Endothelial cell of umbilical vein (primary cell): ENCODE measurements at regions of chr11 and their contacts with region 1.

Region 1: GRCh38 chr11:9774591-9775397 is 110.9 kb downstream of the SWAP70 start:
- DNase-seq: peak; percentile 35
- H3K4me3 ChIP-seq: no peak overlapping the region
- H3K27ac ChIP-seq: no peak overlapping the region
- H3K4me1 ChIP-seq: peaks cover 6% of the 10 kb centered on the region
- H3K27me3 ChIP-seq: no peaks in the 10 kb centered on the region
- CTCF ChIP-seq: no peak
- POLR2A ChIP-seq: no peak

Region 2: GRCh38 chr11:9600644-9601036 is 174.2 kb before region 1 on chr11:
- CTCF ChIA-PET with region 1: no interaction called
- POLR2A ChIA-PET with region 1: no interaction called
- dilution Hi-C with region 1: no loop called
- intact Hi-C with region 1: no loop called
- DNase-seq: no peak
- H3K4me3 ChIP-seq: no peak overlapping the region
- H3K27ac ChIP-seq: no peak overlapping the region
- H3K4me1 ChIP-seq: peaks cover 3% of the 10 kb centered on the region
- H3K27me3 ChIP-seq: no peaks in the 10 kb centered on the region
- CTCF ChIP-seq: no peak
- POLR2A ChIP-seq: no peak

Region 3: GRCh38 chr11:9626496-9627394 is 148.0 kb before region 1 on chr11:
- CTCF ChIA-PET with region 1: no interaction called
- POLR2A ChIA-PET with region 1: no interaction called
- dilution Hi-C with region 1: no loop called
- intact Hi-C with region 1: no loop called
- DNase-seq: peak; percentile 96
- H3K4me3 ChIP-seq: peak overlapping the region in 1 of 3 experiments; percentile 19
- H3K27ac ChIP-seq: peak overlapping the region; percentile 96
- H3K4me1 ChIP-seq: peaks cover 33% of the 10 kb centered on the region
- H3K27me3 ChIP-seq: no peaks in the 10 kb centered on the region
- CTCF ChIP-seq: no peak
- POLR2A ChIP-seq: peak; percentile 84

Region 4: GRCh38 chr11:9748361-9748970 is 26.3 kb before region 1 on chr11:
- CTCF ChIA-PET with region 1: no interaction called
- POLR2A ChIA-PET with region 1: no interaction called
- dilution Hi-C with region 1: no loop called
- intact Hi-C with region 1: no loop called
- DNase-seq: peak; percentile 81
- H3K4me3 ChIP-seq: no peak overlapping the region
- H3K27ac ChIP-seq: no peak overlapping the region
- H3K4me1 ChIP-seq: peaks cover 16% of the 10 kb centered on the region
- H3K27me3 ChIP-seq: no peaks in the 10 kb centered on the region
- CTCF ChIP-seq: peak; percentile 60 to 66
- POLR2A ChIP-seq: peak; percentile 1

Region 5: DNA sequence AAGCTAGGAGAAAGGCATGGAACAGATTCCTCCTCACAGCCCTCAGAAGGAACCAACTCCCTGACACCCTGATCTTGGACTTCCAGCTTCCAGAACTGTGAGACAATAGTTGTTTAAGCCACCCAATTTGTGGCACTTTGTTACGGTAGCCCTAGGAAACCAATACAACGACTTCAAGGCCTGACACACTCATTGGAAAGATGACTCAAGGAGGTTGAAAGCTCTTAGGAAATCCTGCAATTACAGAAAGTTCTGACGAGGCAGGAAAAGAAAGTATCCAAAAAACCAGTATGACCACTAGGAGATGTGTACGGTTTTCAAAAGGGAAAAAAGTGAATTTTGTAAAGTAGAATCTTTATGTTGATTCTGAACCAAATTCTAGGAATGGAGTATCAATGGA is 50.5 kb after region 1 on chr11:
- CTCF ChIA-PET with region 1: no interaction called
- POLR2A ChIA-PET with region 1: no interaction called
- dilution Hi-C with region 1: no loop called
- intact Hi-C with region 1: loop called (anchors 5 kb)
- DNase-seq: peak; percentile 35
- H3K4me3 ChIP-seq: no peak overlapping the region
- H3K27ac ChIP-seq: no peak overlapping the region
- H3K4me1 ChIP-seq: peaks cover 30% of the 10 kb centered on the region
- H3K27me3 ChIP-seq: no peaks in the 10 kb centered on the region
- CTCF ChIP-seq: no peak
- POLR2A ChIP-seq: no peak